ENCODE measurements at regions of chr17 and their contacts with region 1.

Region 1: DNA sequence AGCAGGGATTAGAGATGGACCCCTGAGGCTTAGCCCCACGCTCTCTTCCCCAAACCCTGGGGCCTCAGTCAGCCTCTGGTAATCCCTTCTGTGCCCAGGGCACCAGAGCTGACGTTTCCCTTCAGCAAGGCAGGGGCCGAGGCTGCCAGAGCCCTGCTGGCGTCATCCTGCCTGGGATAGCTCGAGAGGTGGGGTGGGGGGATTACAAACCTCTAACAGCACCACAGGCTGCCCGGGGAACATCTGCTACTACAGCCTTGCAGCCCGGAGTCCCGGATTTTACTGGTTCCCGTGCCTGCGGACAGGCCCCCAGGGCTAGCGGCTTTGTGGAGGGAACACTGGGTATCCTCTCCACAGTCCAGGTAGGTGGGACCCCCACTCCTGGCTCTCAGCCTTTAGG is at the start of gene AANAT:
- DNase-seq: no peak
- H3K4me3 ChIP-seq: no peak within 1 kb of the TSS
- CTCF ChIP-seq: no peak

Region 2: DNA sequence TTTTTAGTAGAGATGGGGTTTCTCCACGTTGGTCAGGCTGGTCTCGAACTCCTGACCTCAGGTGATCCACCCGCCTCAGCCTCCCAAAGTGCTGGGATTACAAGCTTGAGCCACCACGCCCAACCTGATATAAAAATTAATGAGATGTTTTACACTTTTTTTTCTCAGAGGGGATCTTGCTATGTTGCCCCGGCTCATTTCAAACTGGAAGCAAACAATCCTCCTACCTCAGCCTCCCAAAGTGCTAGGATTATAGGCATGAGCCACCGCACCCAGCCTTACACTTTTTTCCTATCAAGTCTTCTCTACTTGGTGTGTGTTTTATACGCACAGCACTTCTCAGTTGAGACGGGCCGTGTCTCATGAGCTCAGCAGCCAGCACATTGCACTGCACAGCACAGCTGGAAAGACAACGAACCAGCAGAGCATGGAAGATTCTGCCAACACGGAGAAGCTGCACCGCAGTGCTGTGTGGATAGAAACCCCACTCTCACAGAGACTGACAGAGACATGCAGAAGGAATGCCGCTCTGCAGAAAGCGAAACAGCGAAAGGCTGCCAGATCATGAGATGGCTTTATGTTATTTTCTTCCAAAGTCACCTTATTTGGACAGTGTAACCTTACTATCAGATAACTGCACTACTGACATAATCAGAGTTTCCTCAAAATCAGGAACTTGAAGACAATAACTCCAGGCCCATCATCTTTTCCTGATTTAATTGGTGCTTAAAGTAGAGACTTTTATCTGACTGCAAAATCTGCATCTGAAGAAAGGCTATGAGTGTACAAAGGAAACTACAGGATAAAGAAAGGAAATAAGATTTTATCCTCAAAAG is 152.8 kb before region 1 on chr17:
- CTCF ChIA-PET with region 1: no interaction called
- POLR2A ChIA-PET with region 1: no interaction called
- DNase-seq: no peak
- H3K4me3 ChIP-seq: no peak overlapping the region
- CTCF ChIP-seq: no peak

Region 3: DNA sequence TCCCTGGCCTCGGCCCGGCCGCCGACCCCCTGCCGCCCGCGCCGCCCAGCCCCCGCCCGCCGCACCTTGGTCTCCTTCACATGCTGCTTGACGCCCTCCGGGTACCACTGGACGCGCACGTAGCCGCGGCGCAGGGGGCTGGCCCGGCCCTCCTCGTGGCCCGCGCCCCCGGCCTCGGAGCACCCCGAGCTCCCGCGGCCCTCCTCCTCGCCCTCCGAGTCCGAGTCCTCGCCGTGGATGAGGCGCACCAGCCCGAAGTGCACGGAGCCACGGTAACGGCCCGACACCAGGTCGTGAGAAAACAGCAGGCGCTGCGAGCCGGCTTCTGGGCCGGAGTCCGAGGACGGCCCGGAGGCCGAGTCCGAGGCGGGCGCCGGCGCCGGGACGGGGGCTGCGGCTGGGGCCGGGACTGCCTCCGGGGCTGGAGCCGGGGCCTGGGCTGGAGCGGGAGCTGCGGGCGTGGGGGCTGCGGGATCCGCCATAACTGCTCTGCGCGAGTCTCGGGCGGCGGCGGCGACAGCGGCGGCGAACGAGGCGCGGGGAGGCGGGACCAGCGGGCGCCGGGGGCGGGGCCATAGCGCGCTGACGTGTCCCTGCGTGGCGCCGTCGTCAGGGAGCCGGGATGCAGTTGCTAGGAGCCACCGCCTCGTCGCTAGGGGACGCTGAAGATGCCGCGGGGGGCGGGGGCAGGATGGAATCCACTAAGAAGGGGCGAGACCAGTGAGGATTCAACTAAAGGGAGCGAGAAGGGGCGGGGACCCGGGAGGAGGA is 14.5 kb before region 1 on chr17 and contains the start of gene UBE2O:
- CTCF ChIA-PET with region 1: interaction called, 69 read pairs
- POLR2A ChIA-PET with region 1: no interaction called
- DNase-seq: no peak
- H3K4me3 ChIP-seq: peak within 1 kb of the TSS; percentile 77
- CTCF ChIP-seq: peak; percentile 80

Region 4: DNA sequence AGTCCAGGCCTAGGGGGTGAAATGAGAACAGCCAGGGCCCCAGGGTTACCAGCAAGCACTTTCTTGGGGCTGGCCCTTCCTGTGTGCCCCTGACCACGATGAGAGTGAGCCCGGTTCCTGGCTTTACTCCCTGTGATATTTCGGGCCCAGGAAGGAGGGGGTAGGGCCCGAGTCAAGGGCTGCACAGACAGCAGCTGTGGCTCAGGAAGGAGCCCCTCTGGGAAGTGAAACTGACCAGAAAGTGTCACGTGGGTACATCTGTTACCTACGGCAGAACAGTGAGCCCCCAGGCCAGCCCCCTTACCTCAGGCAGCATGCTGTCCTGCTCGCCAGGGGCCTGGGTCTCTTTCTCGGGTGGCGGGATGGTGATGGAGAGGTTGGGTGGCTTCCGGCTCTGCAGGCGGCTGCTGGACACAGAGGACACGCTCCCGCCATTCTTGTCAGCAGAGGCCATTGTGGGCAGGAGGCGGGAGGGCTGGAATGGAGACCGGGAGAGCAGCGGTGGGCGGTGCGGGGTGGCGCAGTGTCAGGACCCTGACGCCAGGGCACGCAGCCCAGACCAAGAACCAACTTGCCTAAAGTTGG is 13.8 kb after region 1 on chr17:
- CTCF ChIA-PET with region 1: interaction called, 1,209 read pairs
- POLR2A ChIA-PET with region 1: no interaction called
- DNase-seq: no peak
- H3K4me3 ChIP-seq: no peak overlapping the region
- CTCF ChIP-seq: no peak

Region 5: GRCh38 chr17:76547184-76547641 is 79.8 kb after region 1 on chr17:
- CTCF ChIA-PET with region 1: interaction called, 14 read pairs
- POLR2A ChIA-PET with region 1: no interaction called
- DNase-seq: no peak
- H3K4me3 ChIP-seq: no peak overlapping the region
- CTCF ChIP-seq: peak; percentile 68

Measured in AG04449 (cell line).